ENCODE measurements at regions of chr6 and their contacts with region 1.

Region 1: GRCh38 chr6:17865798-17866725 is 121.4 kb downstream of the KIF13A start:
- DNase-seq: peak; percentile 97
- H3K4me3 ChIP-seq: no peak overlapping the region
- H3K27ac ChIP-seq: peak overlapping the region; percentile 89
- H3K4me1 ChIP-seq: peaks cover 67% of the 10 kb centered on the region
- H3K27me3 ChIP-seq: no peaks in the 10 kb centered on the region
- CTCF ChIP-seq: no peak
- POLR2A ChIP-seq: no peak

Region 2: DNA sequence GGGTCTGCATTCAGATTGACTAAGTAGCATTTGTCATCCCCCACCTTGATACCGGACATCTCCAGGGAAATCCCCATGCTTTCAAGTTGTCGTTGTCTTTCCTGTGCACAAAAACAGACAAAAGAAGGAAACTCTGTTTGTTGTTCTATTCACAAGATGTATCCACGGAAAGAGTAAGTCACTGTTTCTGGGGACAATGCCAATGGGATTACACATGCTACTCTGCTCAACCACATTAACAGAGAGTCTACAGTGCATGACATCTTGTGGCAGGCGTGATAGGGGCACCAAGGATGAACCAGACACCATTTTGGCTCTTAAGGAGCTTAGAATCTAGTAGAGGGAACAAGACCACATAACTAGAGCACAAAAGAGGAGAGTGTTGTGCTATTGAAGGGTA is 34.9 kb before region 1 on chr6:
- CTCF ChIA-PET with region 1: no interaction called
- POLR2A ChIA-PET with region 1: no interaction called
- dilution Hi-C with region 1: no loop called
- intact Hi-C with region 1: loop called (anchors 1 kb)
- DNase-seq: peak; percentile 98
- H3K4me3 ChIP-seq: no peak overlapping the region
- H3K27ac ChIP-seq: peak overlapping the region; percentile 96
- H3K4me1 ChIP-seq: peaks cover 23% of the 10 kb centered on the region
- H3K27me3 ChIP-seq: no peaks in the 10 kb centered on the region
- CTCF ChIP-seq: peak in 1 of 2 donors; percentile 7
- POLR2A ChIP-seq: peak; percentile 49

Region 3: GRCh38 chr6:17851001-17851719 is 14.9 kb before region 1 on chr6:
- CTCF ChIA-PET with region 1: interaction called, 9 read pairs
- POLR2A ChIA-PET with region 1: no interaction called
- dilution Hi-C with region 1: no loop called
- intact Hi-C with region 1: loop called (anchors 1 kb)
- DNase-seq: peak; percentile 65
- H3K4me3 ChIP-seq: peak overlapping the region in 1 of 3 experiments; percentile 51
- H3K27ac ChIP-seq: peak overlapping the region; percentile 93
- H3K4me1 ChIP-seq: peaks cover 49% of the 10 kb centered on the region
- H3K27me3 ChIP-seq: no peaks in the 10 kb centered on the region
- CTCF ChIP-seq: no peak
- POLR2A ChIP-seq: no peak

Region 4: DNA sequence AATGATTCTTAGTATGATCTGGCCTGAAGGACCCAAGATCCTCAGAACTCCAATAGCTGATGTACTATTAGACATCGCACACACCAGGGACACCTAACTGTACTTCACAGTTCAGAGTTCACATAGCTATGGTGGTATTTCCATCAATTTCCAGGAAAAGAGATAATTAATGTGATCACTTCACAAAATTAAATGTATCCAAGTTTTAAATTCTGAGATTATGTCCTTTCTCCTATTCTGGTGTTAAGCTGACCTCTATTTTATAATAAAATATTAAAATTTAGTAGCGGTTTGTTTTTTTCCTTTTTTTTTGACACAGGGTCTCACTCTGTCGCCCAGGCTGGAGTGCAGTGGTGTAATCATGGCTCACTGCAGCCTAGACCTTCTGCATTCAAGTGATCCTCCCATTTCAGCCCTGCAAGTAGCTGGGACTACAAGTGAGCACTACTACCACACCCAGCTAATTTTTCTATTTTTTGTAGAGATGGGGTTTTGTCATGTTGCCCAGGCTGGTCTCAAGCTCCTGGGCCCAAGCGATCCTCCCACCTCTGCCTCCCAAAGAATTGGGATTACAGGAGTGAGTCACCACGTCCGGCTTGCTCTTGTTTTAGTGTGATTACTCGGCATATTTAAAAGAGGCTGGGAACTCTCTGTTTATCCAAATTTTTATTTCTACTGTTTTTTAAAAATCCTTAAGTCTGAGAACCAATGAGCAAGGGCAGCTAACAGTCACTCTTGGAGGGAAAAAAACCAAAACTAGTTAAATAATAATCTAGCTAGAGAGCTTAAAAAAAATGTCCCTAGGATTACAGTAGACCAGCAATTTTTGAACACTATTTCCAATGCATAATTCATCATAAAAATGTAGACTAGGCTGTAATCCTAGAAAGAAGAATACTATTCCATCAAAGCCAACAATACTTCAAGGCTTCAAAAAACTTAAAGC is 105.3 kb after region 1 on chr6:
- CTCF ChIA-PET with region 1: no interaction called
- POLR2A ChIA-PET with region 1: no interaction called
- dilution Hi-C with region 1: no loop called
- intact Hi-C with region 1: loop called (anchors 2 kb)
- DNase-seq: peak; percentile 41
- H3K4me3 ChIP-seq: no peak overlapping the region
- H3K27ac ChIP-seq: peak overlapping the region; percentile 26
- H3K4me1 ChIP-seq: peaks cover 33% of the 10 kb centered on the region
- H3K27me3 ChIP-seq: no peaks in the 10 kb centered on the region
- CTCF ChIP-seq: no peak
- POLR2A ChIP-seq: no peak

Region 5: GRCh38 chr6:18042536-18043145 is 176.6 kb after region 1 on chr6:
- CTCF ChIA-PET with region 1: interaction called, 3 read pairs
- POLR2A ChIA-PET with region 1: no interaction called
- dilution Hi-C with region 1: no loop called
- intact Hi-C with region 1: loop called (anchors 5 kb)
- DNase-seq: no peak
- H3K4me3 ChIP-seq: no peak overlapping the region
- H3K27ac ChIP-seq: no peak overlapping the region
- H3K4me1 ChIP-seq: peaks cover 3% of the 10 kb centered on the region
- H3K27me3 ChIP-seq: no peaks in the 10 kb centered on the region
- CTCF ChIP-seq: no peak
- POLR2A ChIP-seq: no peak

Region 6: DNA sequence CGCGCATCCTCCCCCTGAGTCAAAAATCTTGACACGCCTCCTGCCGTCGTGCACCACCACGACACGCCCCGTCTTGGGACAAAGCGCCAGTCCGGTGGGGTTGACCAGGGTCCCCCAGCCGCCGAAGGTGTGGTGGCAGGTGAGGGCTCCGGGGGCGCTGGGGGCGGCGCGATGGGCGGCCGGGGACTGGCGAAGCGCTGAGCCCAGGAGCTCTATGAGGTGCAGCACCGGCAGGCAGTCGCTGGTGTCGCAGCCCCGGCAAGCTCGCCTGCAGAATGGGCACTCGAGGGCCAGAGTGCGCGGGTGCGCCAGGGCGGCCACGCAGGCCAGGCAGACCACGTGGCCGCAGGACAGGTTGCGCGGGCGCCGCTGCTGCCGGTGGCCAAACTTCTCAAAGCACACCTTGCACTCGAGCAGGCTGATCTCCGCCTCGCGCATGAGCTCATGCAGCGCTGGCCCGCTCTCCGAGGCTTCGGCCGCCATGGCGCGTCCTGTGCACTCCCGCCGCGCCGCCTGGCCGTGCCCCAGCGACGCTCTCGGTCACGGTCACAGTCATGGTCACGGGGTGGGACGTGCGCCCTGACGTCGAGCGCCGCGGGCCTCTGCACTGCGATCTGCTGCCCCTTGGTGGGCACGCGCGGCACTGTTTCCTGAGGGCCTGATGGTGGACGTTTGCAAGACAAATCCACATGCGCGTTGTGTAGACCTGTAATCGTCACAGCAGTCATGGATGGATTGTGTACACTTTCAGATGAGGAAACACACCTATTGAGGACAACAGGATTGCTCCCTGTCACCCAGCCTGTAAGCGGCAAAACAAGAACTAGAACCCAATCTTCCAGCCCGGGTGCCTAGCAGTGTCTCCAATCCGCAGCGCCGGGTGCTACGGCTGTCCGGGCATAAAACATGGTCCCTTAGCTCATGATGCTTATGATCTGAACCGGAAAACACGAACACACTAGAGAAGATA is 256.3 kb after region 1 on chr6 and contains the start of gene NHLRC1:
- CTCF ChIA-PET with region 1: interaction called, 6 read pairs
- POLR2A ChIA-PET with region 1: no interaction called
- dilution Hi-C with region 1: no loop called
- intact Hi-C with region 1: loop called (anchors 2 kb)
- DNase-seq: peak; percentile 92
- H3K4me3 ChIP-seq: peak within 1 kb of the TSS in 1 of 3 experiments; percentile 35
- H3K27ac ChIP-seq: no peak within 1 kb of the TSS
- H3K4me1 ChIP-seq: peaks cover 5% of the 10 kb centered on the region
- H3K27me3 ChIP-seq: no peaks in the 10 kb centered on the region
- CTCF ChIP-seq: peak; percentile 94 to 97
- POLR2A ChIP-seq: peak; percentile 65
- total RNA-seq, gene NHLRC1: 2.2 and 2.3 TPM in 2 replicates

Region 7: DNA sequence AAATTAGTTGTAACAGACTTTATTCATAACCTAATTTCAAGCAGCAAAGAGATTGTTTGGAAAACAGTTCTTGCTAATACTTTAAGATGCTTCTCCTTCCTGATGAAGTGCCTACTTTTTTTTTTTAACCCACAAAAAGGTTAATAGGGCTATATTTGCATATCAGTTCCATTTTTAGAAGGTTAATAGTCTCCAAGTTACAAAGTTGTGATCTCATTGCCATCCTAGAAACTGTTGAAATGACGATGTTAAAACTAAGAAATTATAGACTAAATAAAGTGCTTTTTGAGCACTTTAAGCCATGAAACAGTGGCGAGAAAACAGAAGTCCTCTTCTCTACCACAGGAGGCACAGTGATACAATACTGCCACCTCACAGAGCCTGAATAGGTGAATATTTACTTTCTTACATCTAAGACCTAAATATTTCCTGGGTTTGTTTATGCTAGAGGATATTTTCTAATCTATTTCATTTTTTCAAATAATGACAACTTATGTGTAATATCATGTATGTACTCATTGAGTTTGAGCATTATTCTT is 526.4 kb after region 1 on chr6:
- CTCF ChIA-PET with region 1: no interaction called
- POLR2A ChIA-PET with region 1: no interaction called
- dilution Hi-C with region 1: no loop called
- intact Hi-C with region 1: loop called (anchors 10 kb)
- DNase-seq: no peak
- H3K4me3 ChIP-seq: no peak overlapping the region
- H3K27ac ChIP-seq: no peak overlapping the region
- H3K4me1 ChIP-seq: peaks cover 64% of the 10 kb centered on the region
- H3K27me3 ChIP-seq: no peaks in the 10 kb centered on the region
- CTCF ChIP-seq: no peak
- POLR2A ChIP-seq: no peak